Common myeloid progenitor, CD34-positive (primary cell): ENCODE measurements at regions of chr17 and their contacts with region 1.

Region 1: GRCh38 chr17:38735161-38735997 is 5.2 kb downstream of the CISD3 start:
- DNase-seq: peak; percentile 48 to 66 (median 66)
- H3K4me3 ChIP-seq: no peak overlapping the region
- H3K27ac ChIP-seq: no peak overlapping the region
- H3K4me1 ChIP-seq: peaks cover 3 to 25% (median 20%) of the 10 kb centered on the region in 4 experiments
- H3K27me3 ChIP-seq: peaks cover 0 to 10% (median 0%) of the 10 kb centered on the region in 5 experiments

Region 2: GRCh38 chr17:38617011-38617867 is 118.1 kb before region 1 on chr17:
- CTCF ChIA-PET with region 1: no interaction called
- POLR2A ChIA-PET with region 1: no interaction called
- DNase-seq: no peak
- H3K4me3 ChIP-seq: no peak overlapping the region
- H3K27ac ChIP-seq: no peak overlapping the region
- H3K4me1 ChIP-seq: no peaks in the 10 kb centered on the region
- H3K27me3 ChIP-seq: peaks cover 3 to 26% (median 15%) of the 10 kb centered on the region in 5 experiments

Region 3: DNA sequence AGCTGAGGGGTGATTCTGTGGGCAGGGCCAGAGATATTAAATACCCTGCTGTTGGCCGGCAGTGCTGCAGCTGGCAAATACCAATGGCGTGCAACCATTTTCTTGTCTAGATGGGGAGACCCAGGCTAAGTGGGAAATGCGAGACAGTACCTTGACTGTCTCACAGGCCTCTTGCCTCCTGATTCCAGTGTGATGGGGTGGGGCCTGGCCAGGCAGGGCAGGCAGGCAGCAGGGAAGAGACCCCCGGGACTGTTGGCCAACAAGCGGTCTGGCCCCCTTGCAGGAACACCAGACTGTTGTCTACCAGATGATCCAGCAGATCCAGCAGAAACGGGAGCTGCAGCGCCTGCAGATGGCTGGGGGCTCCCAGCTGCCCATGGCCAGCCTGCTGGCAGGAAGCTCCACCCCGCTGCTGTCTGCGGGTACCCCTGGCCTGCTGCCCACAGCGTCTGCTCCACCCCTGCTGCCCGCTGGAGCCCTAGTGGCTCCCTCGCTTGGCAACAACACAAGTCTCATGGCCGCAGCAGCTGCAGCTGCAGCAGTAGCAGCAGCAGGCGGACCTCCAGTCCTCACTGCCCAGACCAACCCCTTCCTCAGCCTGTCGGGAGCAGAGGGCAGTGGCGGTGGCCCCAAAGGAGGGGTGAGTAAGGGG is 10.9 kb before region 1 on chr17:
- CTCF ChIA-PET with region 1: no interaction called
- POLR2A ChIA-PET with region 1: no interaction called
- DNase-seq: peak; percentile 50 to 78 (median 72)
- H3K4me3 ChIP-seq: peak overlapping the region in 1 of 7 experiments; percentile 25
- H3K27ac ChIP-seq: no peak overlapping the region
- H3K4me1 ChIP-seq: peaks cover 5 to 33% (median 27%) of the 10 kb centered on the region in 4 experiments
- H3K27me3 ChIP-seq: no peaks in the 10 kb centered on the region

Region 4: DNA sequence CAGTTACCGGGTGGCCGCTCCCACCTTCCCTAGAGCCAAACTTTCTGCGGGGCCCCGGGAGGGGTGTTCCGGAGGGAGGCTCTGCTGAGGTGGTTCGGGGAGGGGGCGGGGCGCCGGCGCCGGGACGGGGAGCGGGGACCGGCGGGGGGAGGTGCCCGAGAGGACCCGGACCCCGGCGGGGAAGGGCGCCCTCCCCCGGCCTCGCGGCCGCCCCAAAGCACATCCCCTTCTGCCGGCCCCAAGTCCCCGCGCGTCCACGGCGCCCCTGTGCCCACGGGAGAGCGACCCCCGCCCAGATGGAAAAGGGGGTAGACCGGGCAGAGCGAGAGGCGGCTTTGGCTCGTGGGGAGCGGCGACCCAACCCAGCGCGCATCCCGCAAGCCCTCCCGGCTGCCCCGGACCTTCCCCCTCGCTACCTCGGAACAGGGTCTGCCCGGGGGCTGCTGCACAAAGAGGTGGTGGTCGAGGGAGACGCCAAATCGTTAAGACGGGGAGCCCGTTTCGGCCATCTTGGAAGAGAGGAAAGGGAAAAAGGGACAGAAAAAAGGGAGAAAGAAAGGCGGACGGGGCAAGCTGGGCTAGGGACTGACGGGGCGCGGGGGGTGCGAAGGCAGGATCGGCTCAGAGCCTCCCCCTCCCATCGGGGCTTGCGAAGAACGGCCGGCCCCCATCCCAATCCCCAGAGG is 12.2 kb after region 1 on chr17:
- CTCF ChIA-PET with region 1: interaction called, 19 read pairs
- POLR2A ChIA-PET with region 1: no interaction called
- DNase-seq: peak in 1 of 3 donors; percentile 12
- H3K4me3 ChIP-seq: peak overlapping the region; percentile 23 to 76 (median 64)
- H3K27ac ChIP-seq: no peak overlapping the region
- H3K4me1 ChIP-seq: peaks cover 5 to 55% (median 52%) of the 10 kb centered on the region in 4 experiments
- H3K27me3 ChIP-seq: peaks cover 12 to 64% (median 36%) of the 10 kb centered on the region in 5 experiments

Region 5: DNA sequence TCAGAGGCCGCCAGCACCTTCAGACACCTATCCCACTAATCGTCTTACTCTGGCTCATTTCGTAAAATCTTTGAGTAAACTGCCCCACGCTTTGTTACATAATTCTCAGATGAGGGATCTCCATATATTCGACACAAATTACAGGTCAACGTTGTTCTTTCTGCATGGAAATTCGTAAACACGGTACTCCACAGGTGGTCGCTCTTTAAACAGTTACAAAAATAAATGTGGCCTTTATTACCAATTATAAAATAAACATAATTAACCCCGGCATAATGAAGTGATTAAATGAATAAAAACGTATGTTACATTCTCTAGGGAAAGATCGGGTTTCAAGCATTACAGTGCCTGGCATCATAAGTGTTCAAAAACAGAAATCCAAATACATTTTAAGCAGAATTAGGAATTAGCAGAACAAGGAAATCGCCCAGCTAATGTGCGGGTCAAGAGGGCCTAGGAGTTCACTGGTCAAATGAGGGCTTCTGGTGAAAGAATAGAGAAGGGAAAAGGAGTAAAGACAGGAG is 64.9 kb after region 1 on chr17:
- CTCF ChIA-PET with region 1: no interaction called
- POLR2A ChIA-PET with region 1: interaction called, 14 read pairs
- DNase-seq: no peak
- H3K4me3 ChIP-seq: peak overlapping the region; percentile 71 to 91 (median 83)
- H3K27ac ChIP-seq: peak overlapping the region in 1 of 2 experiments; percentile 86
- H3K4me1 ChIP-seq: peaks cover 16 to 30% (median 28%) of the 10 kb centered on the region in 4 experiments
- H3K27me3 ChIP-seq: no peaks in the 10 kb centered on the region